HEK293 (cell line): ENCODE measurements at regions of chr6 and their contacts with region 1.

Region 1: GRCh38 chr6:28769626-28770402 is 154.0 kb downstream of the TRIM27 start:
- H3K4me3 ChIP-seq: no peak overlapping the region
- H3K27ac ChIP-seq: no peak overlapping the region
- H3K4me1 ChIP-seq: peaks cover 8% of the 10 kb centered on the region
- CTCF ChIP-seq: 0 out of 2 replicates have a peak, but pooled peaks have one; percentile 57

Region 2: DNA sequence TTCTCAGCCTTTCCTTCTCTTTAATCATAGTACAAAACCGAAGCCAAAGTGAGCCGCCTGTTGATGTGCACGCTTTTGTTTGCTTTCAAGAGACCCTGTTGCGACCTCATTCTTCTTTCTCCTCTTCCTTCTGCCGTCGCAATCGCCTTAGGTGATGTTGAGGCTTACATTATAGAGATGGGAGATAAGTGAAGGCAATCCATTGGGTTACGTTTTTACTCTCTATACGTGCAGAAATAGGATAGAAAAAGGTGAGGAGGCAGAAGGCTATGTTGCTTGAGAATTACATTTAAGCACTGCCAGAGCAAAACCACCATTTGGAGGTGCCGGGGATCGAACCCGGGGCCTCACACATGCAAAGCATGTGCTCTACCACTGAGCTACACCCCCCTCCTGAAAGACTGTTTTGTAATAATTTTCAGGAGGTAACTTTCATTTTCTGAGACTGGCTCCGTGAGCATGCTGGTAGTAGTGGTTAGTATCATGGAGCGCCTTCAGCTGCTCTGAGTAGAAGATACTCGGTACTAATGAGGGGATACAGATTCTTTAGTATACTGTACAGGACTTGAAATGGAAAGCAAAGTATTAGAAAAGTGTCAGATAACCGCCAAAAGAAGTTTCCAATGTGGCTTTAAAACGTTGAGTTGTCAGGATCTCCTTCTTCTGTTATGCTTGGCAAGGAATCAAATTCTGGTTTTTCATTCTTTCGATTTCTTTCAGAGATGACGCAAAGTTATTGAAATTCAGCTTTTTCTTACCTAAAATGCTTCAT is 11.6 kb before region 1 on chr6:
- CTCF ChIA-PET with region 1: interaction called, 11 read pairs
- POLR2A ChIA-PET with region 1: interaction called, 7 read pairs
- H3K4me3 ChIP-seq: peak overlapping the region; percentile 48
- H3K27ac ChIP-seq: peak overlapping the region; percentile 82
- H3K4me1 ChIP-seq: no peaks in the 10 kb centered on the region
- CTCF ChIP-seq: no peak

Region 3: GRCh38 chr6:28794175-28795002 is 24.6 kb after region 1 on chr6:
- CTCF ChIA-PET with region 1: interaction called, 47 read pairs
- POLR2A ChIA-PET with region 1: interaction called, 6 read pairs
- H3K4me3 ChIP-seq: peak overlapping the region; percentile 39
- H3K27ac ChIP-seq: no peak overlapping the region
- H3K4me1 ChIP-seq: 0 out of 2 replicates have a peak, but pooled peaks cover 4% of the 10 kb centered on the region
- CTCF ChIP-seq: peak; percentile 6; the same call in 1 of the 2 replicates